GM12878 (cell line): ENCODE measurements at regions of chr7 and their contacts with region 1.

Region 1: GRCh38 chr7:126411032-126411820 is 841.5 kb downstream of the GRM8 start:
- DNase-seq: peak; percentile 11
- ATAC-seq: peak; percentile 60
- H3K4me3 ChIP-seq: peak overlapping the region; percentile 40; the same call in 1 of the 2 replicates
- H3K27ac ChIP-seq: peak overlapping the region; percentile 41; the same call in 1 of the 2 replicates
- H3K4me1 ChIP-seq: no peaks in the 10 kb centered on the region
- H3K27me3 ChIP-seq: no peaks in the 10 kb centered on the region
- CTCF ChIP-seq: no peak
- EP300 ChIP-seq: no peak
- POLR2A ChIP-seq: no peak
- RAD21 ChIP-seq: no peak

Region 2: DNA sequence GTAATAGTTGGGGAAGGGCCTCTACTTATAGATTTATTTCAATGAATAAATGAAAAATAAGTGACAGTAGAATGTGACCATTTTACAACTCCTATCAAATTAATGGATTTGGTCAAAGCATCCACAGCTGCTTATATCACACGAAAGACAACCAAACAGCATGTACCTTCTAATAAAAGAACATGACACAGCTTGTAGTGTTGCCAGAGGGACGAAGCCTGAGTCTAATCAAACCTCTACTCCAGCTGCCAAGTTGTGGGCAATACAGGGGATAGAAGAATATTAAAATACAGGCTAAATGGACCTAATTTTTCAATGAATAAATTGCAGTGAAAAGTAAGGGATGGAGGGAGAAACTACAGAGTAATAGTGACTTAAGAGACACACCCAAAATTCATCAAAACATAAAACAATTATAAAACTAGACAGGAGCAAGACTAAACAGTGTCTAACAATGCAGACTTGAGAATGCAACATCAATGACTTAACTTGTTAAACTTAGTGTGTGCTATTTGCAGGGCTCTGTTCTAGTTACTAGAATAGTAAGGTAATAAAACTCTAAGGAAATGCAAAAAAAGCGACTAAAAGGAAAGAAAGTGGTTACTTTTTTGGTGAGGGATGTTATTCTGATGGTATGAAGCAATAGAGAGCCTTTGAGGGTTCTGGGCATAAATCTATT is 12.2 kb before region 1 on chr7:
- CTCF ChIA-PET with region 1: interaction called, 26 read pairs
- POLR2A ChIA-PET with region 1: interaction called, 15 read pairs
- RAD21 ChIA-PET with region 1: interaction called, 31 read pairs
- SMC1A ChIA-PET with region 1: interaction called, 77 read pairs
- in situ Hi-C with region 1: no loop called
- intact Hi-C with region 1: no loop called
- DNase-seq: no peak
- ATAC-seq: no peak
- H3K4me3 ChIP-seq: no peak overlapping the region
- H3K27ac ChIP-seq: no peak overlapping the region
- H3K4me1 ChIP-seq: no peaks in the 10 kb centered on the region; the same call in 1 of the 2 replicates
- H3K27me3 ChIP-seq: no peaks in the 10 kb centered on the region
- CTCF ChIP-seq: no peak
- EP300 ChIP-seq: no peak
- POLR2A ChIP-seq: no peak
- RAD21 ChIP-seq: no peak

Region 3: GRCh38 chr7:126426652-126427051 is 15.4 kb after region 1 on chr7:
- CTCF ChIA-PET with region 1: interaction called, 20 read pairs
- POLR2A ChIA-PET with region 1: no interaction called
- RAD21 ChIA-PET with region 1: interaction called, 3 read pairs
- SMC1A ChIA-PET with region 1: interaction called, 16 read pairs
- in situ Hi-C with region 1: no loop called
- intact Hi-C with region 1: no loop called
- DNase-seq: no peak
- ATAC-seq: no peak
- H3K4me3 ChIP-seq: no peak overlapping the region
- H3K27ac ChIP-seq: no peak overlapping the region
- H3K4me1 ChIP-seq: no peaks in the 10 kb centered on the region
- H3K27me3 ChIP-seq: no peaks in the 10 kb centered on the region
- CTCF ChIP-seq: no peak
- EP300 ChIP-seq: no peak
- POLR2A ChIP-seq: no peak
- RAD21 ChIP-seq: no peak

Region 4: DNA sequence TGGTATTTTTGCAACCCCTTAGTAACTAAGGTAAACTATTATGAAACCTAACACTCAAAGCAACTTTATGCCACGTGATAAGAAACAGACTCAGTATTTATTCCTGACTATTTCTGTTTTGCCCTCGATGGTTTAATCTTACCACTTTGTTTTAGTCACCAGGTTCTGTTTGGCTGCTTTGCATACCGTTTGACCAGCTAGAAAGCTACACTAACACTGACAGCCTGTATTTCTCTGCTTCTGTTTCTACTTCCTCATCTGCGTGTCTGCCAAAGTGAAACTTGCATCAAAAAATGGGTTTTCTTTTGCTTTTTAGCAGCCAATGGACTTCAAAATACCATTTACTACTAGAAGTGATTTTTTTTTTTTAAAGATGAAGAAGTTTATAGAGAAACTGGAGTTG is 39.0 kb after region 1 on chr7:
- CTCF ChIA-PET with region 1: interaction called, 5 read pairs
- POLR2A ChIA-PET with region 1: no interaction called
- RAD21 ChIA-PET with region 1: interaction called, 3 read pairs
- SMC1A ChIA-PET with region 1: interaction called, 34 read pairs
- in situ Hi-C with region 1: no loop called
- intact Hi-C with region 1: no loop called
- DNase-seq: peak; percentile 75
- ATAC-seq: peak; percentile 96
- H3K4me3 ChIP-seq: peak overlapping the region; percentile 23; the same call in 1 of the 2 replicates
- H3K27ac ChIP-seq: peak overlapping the region; percentile 89
- H3K4me1 ChIP-seq: peaks cover 28% of the 10 kb centered on the region
- H3K27me3 ChIP-seq: no peaks in the 10 kb centered on the region
- CTCF ChIP-seq: no peak
- EP300 ChIP-seq: peak in 1 of 2 experiments; percentile 72; a peak in 2 of 4 replicates
- POLR2A ChIP-seq: no peak
- RAD21 ChIP-seq: no peak